ENCODE measurements at regions of chr3 and their contacts with region 1.

Region 1: GRCh38 chr3:59575113-59576001 is 525.5 kb upstream of the CFAP20DC start:
- DNase-seq: peak; percentile 64
- H3K27ac ChIP-seq: peak overlapping the region; percentile 56
- CTCF ChIP-seq: peak; percentile 94

Region 2: DNA sequence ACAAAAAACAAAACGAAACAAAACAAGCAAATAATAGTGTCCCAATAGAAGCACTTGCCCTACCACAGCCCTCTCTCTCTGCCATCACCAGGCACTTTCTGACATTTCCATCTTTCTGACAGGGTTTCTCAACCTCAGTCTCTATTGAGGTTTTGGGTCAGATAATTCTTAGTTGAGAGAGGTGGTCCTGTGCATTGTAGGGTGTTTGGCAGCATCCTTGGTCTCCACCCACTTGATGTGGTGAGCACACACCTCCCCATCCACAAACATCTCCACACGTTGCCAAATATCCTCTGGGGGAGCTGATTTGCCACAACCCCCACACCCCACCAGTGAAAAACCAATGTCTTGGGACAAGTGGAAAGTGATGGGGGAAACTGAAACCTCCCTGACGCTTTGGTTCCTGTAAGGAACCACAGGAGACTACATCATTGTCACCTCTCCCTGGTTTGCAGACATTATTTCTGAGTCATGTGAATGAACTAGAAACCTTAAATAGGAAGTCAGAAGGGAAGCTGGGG is 208.2 kb after region 1 on chr3:
- CTCF ChIA-PET with region 1: no interaction called
- POLR2A ChIA-PET with region 1: no interaction called
- DNase-seq: no peak
- H3K27ac ChIP-seq: no peak overlapping the region
- CTCF ChIP-seq: no peak

Region 3: DNA sequence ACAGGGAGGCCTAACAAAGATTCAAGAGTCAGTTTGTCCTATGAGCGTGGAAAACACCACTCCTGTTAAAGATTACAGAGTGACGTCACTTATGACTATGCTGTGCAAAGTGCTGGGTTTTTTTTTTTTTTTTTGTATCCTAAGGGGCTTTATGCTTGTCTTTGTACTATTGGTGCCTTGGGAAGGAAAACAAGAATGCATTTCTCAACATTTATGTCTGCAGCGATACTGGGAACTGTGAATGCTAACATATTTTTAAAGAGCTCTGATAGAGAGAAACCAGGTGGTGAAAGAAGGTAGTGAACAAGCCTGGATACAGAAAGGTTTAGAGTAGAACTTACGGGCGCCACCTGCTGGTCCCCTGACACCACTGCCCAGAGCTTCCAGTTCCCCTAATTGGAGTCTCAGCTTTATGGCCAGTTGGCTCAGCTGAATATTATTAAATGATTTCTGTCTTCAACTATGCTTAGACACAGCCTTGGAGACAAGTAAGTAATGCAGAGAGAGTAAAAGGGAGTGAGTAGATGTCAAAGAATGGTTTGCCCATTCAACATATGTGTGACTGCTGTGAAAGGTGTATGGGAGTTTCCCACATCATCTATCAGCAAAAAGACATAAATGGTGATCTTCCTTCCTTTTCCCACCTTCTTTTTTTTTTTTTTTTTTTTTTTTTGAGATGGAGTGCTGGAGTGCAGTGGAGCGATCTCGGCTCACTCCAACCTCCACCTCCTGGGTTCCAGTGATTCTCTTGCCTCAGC is 282.4 kb after region 1 on chr3:
- CTCF ChIA-PET with region 1: interaction called, 11 read pairs
- POLR2A ChIA-PET with region 1: no interaction called
- DNase-seq: peak; percentile 61
- H3K27ac ChIP-seq: no peak overlapping the region
- CTCF ChIP-seq: peak; percentile 89

Measured in RWPE1 (cell line).